ENCODE measurements at regions of chr17 and their contacts with region 1.

Region 1: DNA sequence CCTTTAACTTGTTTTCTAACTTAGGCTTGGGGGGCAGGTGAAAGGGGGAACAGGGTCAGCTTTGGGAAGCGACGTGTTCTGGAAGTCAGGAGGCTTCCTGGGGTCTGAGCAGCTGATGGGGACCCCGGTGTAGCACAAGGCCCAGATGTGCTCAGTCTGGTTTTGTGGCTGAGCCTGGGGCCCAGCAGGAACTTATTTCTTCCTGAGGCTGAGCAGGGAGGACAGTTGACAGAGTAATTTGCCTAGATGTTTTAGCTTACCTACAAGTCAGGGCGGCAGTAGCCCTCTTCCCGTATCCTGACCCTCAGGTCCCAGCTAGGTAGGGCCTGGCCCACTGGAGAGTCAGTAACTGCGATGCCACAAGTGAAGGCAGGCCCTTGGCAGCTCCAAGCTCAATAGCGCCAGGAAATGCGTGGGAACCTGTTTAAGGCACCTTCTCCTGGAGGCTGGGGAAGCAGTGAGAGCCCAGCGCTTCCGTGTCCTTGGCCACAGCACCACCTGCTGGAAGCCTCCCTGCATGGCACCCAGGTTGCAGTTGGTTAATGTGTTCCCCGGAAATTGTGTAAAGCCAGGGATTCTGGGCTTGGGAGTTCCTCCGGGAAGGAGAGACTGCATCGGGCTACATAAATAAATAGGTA is 5.2 kb downstream of the CCR7 start:
- DNase-seq: peak; percentile 78
- CTCF ChIP-seq: peak; percentile 96

Region 2: GRCh38 chr17:40086150-40087044 is 473.7 kb before region 1 on chr17:
- CTCF ChIA-PET with region 1: no interaction called
- POLR2A ChIA-PET with region 1: no interaction called
- DNase-seq: peak; percentile 79
- CTCF ChIP-seq: peak; percentile 86

Region 3: GRCh38 chr17:40355123-40355803 is 204.8 kb before region 1 on chr17:
- CTCF ChIA-PET with region 1: interaction called, 14 read pairs
- POLR2A ChIA-PET with region 1: no interaction called
- DNase-seq: peak; percentile 84
- CTCF ChIP-seq: peak; percentile 92

Region 4: DNA sequence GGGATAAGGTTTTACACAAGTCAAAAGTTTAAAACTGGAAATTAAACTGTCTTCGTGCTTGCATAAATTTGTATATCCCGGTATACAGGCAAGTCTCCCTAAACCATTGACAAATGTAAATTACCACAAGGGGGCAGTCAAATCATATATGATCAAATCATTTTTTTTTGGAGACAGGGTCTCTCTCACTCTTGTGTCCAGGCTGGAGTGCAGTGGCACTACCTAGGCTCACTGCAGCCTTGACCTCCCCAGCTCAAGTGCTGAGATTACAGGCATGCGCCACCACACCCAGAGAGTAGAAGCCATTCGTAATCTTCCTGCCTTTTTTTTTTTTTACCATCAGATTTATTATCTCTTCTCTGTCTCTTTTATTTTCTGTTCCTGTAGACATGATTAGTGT is 160.9 kb before region 1 on chr17:
- CTCF ChIA-PET with region 1: interaction called, 10 read pairs
- POLR2A ChIA-PET with region 1: no interaction called
- DNase-seq: peak; percentile 31
- CTCF ChIP-seq: peak; percentile 38

Region 5: DNA sequence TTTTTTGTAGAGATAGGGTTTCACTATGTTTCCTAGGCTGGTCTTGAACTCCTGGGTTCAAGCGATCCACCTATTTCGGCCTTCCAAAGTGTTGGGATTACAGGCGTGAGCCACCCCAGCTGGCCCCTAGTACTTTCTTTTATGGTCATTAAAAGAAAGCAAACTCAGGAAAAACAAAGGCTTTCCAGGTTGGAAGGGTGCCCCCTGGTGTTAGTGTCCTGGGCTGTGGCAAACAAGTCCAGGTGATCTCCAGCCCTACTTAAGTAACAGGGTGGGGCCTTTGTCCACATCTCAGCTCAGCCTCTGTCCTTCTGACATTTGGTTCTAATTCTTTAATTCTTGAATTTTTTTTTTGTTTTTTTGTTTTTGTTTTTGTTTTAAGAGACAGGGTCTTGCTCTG is 109.9 kb before region 1 on chr17:
- CTCF ChIA-PET with region 1: interaction called, 25 read pairs
- POLR2A ChIA-PET with region 1: no interaction called
- DNase-seq: peak; percentile 52
- CTCF ChIP-seq: peak; percentile 32

Region 6: GRCh38 chr17:40485851-40486512 is 74.1 kb before region 1 on chr17:
- CTCF ChIA-PET with region 1: no interaction called
- POLR2A ChIA-PET with region 1: no interaction called
- DNase-seq: no peak
- CTCF ChIP-seq: no peak

Region 7: GRCh38 chr17:40542558-40543411 is 17.3 kb before region 1 on chr17:
- CTCF ChIA-PET with region 1: interaction called, 356 read pairs
- POLR2A ChIA-PET with region 1: interaction called, 5 read pairs
- DNase-seq: peak; percentile 71
- CTCF ChIP-seq: no peak

Region 8: DNA sequence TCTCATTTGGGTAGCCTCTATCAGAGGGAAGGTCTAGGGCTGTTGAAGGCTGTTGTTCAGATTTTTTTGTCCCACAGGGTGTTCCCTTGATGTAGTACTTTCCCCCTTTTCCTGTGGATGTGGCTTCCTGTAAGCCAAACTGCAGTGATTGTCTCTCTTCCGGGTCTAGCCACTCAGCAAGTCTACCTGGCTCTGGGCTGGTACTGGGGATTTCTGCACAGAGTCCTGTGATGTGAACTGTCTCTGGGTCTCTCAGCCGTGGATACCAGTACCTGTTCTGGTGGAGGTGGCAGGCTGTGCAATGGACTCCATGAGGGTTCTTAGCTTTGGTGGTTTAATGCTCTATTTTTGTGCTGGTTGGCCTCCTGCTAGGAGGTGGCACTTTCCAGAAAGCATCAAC is 28.5 kb after region 1 on chr17:
- CTCF ChIA-PET with region 1: interaction called, 21 read pairs
- POLR2A ChIA-PET with region 1: no interaction called
- DNase-seq: no peak
- CTCF ChIP-seq: no peak

Region 9: DNA sequence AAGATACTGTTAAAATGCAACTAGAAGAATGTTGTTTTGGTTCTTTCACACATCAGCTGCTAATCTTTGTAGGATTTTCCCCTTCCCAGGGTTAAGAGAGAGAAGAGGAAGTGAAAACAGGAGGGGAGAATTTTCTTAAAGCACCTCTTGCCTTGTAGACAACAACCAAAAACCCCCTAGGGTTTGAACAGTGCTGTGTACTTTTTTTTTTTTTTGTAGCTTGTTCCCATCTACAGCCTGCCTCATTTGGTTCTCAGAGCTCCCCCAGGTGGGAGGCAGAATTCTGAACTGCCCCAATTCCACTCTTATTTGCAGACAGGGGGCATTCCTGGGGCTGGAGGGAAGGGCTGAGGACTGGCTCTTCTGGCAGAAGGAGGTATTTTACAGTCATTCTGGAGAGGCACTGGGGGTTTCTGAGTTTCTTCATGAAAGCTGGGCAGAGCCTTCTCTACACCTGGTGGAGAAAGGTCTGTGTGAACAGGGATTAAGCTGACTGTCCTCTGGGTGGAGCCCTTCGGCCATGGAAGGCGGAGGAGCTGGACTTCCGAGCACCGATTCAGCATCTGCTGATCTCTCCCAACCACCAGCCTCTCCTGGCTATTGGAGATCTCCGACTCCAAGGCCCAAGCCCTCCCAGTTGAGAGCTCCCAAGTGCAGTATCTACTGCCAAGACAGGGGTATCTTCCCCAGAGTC is 55.4 kb after region 1 on chr17:
- CTCF ChIA-PET with region 1: interaction called, 127 read pairs
- POLR2A ChIA-PET with region 1: interaction called, 64 read pairs
- DNase-seq: peak; percentile 81
- CTCF ChIP-seq: peak; percentile 61